Heart right ventricle (tissue), 16 donors: ENCODE measurements at regions of chr17 and their contacts with region 1.

Region 1: GRCh38 chr17:31216053-31216751 is 80.8 kb downstream of the OMG start:
- DNase-seq: no peak
- ATAC-seq: peak in 1 of 8 donors; percentile 16
- H3K4me3 ChIP-seq: no peak overlapping the region
- H3K27ac ChIP-seq: peak overlapping the region in 1 of 10 donors; percentile 3
- H3K4me1 ChIP-seq: peaks cover 0 to 10% (median 0%) of the 10 kb centered on the region in 9 donors
- H3K27me3 ChIP-seq: no peaks in the 10 kb centered on the region
- CTCF ChIP-seq: peak; percentile 59 to 77 (median 67)

Region 2: GRCh38 chr17:30906101-30906911 is 309.9 kb before region 1 on chr17 and contains the start of gene TEFM:
- intact Hi-C with region 1: loop called in 2 of 10 experiments (anchors 5 to 10 kb)
- DNase-seq: peak; percentile 89 to 90
- ATAC-seq: peak; percentile 98 to 99 (median 99)
- H3K4me3 ChIP-seq: peak within 1 kb of the TSS; percentile 63 to 98 (median 78)
- H3K27ac ChIP-seq: peak within 1 kb of the TSS; percentile 86 to 96 (median 92)
- H3K4me1 ChIP-seq: peaks cover 0 to 24% (median 20%) of the 10 kb centered on the region in 9 donors
- H3K27me3 ChIP-seq: no peaks in the 10 kb centered on the region
- CTCF ChIP-seq: no peak
- total RNA-seq, gene TEFM: 9.3 to 15.5 (median 13.8) TPM

Region 3: GRCh38 chr17:31008374-31009041 is 207.7 kb before region 1 on chr17:
- intact Hi-C with region 1: loop called in 7 of 10 experiments (anchors 2 to 5 kb)
- DNase-seq: peak; percentile 42 to 70
- ATAC-seq: peak; percentile 71 to 90 (median 84)
- H3K4me3 ChIP-seq: peak overlapping the region; percentile 61 to 86 (median 73)
- H3K27ac ChIP-seq: peak overlapping the region in 9 of 10 donors; percentile 73 to 90 (median 79)
- H3K4me1 ChIP-seq: peaks cover 0 to 20% (median 0%) of the 10 kb centered on the region in 9 donors
- H3K27me3 ChIP-seq: no peaks in the 10 kb centered on the region
- CTCF ChIP-seq: no peak

Region 4: GRCh38 chr17:31015639-31016038 is 200.6 kb before region 1 on chr17:
- intact Hi-C with region 1: loop called in 9 of 10 experiments (anchors 2 to 5 kb)
- DNase-seq: no peak
- ATAC-seq: peak in 1 of 8 donors; percentile 31
- H3K4me3 ChIP-seq: no peak overlapping the region
- H3K27ac ChIP-seq: no peak overlapping the region
- H3K4me1 ChIP-seq: peaks cover 0 to 14% (median 0%) of the 10 kb centered on the region in 9 donors
- H3K27me3 ChIP-seq: no peaks in the 10 kb centered on the region
- CTCF ChIP-seq: peak in 2 of 9 donors; percentile 29 to 34

Region 5: DNA sequence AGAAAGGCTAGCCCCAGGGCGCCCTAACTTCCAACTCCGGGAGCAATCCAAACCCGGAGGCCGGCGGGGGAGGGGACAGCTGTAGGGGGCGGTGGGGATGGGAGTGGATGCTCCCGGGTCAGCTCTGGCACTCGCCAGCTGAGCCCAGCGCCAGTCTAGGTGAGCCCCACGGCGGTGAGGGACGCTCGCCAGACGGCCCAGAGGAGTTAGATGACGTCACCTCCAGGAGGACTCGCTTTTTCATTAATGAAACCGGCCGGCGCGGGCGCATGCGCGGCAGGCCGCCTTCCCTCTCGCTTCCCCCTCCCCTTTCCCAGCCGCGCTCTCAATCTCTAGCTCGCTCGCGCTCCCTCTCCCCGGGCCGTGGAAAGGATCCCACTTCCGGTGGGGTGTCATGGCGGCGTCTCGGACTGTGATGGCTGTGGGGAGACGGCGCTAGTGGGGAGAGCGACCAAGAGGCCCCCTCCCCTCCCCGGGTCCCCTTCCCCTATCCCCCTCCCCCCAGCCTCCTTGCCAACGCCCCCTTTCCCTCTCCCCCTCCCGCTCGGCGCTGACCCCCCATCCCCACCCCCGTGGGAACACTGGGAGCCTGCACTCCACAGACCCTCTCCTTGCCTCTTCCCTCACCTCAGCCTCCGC is 121.5 kb before region 1 on chr17 and contains the start of gene NF1:
- intact Hi-C with region 1: loop called in 2 of 10 experiments (anchors 10 kb)
- DNase-seq: peak; percentile 96
- ATAC-seq: peak; percentile 97 to 98 (median 98)
- H3K4me3 ChIP-seq: peak within 1 kb of the TSS; percentile 66 to 98 (median 89)
- H3K27ac ChIP-seq: peak within 1 kb of the TSS; percentile 83 to 98 (median 94)
- H3K4me1 ChIP-seq: peaks cover 0 to 27% (median 9%) of the 10 kb centered on the region in 9 donors
- H3K27me3 ChIP-seq: no peaks in the 10 kb centered on the region
- CTCF ChIP-seq: peak in 1 of 9 donors; percentile 6
- total RNA-seq, gene NF1: 41.9 to 71.0 (median 58.9) TPM